ENCODE measurements at regions of chr11 and their contacts with region 1.

Region 1: DNA sequence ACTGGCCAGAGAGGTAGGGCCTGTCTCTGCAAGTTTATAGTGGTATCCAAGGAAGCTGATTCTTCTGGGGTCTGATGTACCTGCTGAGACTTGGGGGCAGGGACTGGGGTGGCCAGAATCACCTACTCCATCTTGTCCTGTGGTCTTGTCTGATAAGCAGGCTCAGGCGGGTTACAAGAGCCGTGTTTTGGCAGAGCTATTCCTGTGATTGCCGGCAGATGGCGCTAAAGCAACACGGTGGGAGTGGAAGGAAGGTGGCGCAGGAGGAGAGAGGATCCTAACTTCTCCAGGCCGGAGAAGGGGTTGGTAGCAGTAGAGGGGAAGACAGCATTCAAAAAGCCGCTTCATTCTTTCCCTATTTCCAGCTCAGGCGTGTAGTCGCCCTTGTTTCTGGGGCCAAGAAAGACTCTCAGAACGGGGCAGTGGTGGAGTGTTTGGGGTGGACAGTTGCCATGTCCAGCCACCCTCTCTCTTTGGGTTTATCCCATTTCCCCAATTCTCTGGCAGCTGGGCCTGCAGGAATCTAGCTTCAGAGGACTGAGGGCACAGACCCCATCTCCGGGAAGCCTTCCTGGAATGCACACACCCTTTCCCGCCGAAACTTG is 15.1 kb downstream of the CHRM1 start:
- DNase-seq: peak; percentile 78 to 81
- ATAC-seq: peak; percentile 70 to 83 (median 75)
- H3K4me3 ChIP-seq: no peak overlapping the region
- H3K27ac ChIP-seq: no peak overlapping the region
- H3K4me1 ChIP-seq: peaks cover 4 to 27% (median 17%) of the 10 kb centered on the region in 9 donors
- H3K27me3 ChIP-seq: no peaks in the 10 kb centered on the region
- CTCF ChIP-seq: peak; percentile 96 to 100 (median 99)

Region 2: GRCh38 chr11:62948765-62949320 is 42.8 kb after region 1 on chr11:
- intact Hi-C with region 1: no loop called
- DNase-seq: no peak
- ATAC-seq: no peak
- H3K4me3 ChIP-seq: no peak overlapping the region
- H3K27ac ChIP-seq: no peak overlapping the region
- H3K4me1 ChIP-seq: no peaks in the 10 kb centered on the region
- H3K27me3 ChIP-seq: peaks cover 0 to 4% (median 0%) of the 10 kb centered on the region in 7 donors
- CTCF ChIP-seq: no peak

Region 3: DNA sequence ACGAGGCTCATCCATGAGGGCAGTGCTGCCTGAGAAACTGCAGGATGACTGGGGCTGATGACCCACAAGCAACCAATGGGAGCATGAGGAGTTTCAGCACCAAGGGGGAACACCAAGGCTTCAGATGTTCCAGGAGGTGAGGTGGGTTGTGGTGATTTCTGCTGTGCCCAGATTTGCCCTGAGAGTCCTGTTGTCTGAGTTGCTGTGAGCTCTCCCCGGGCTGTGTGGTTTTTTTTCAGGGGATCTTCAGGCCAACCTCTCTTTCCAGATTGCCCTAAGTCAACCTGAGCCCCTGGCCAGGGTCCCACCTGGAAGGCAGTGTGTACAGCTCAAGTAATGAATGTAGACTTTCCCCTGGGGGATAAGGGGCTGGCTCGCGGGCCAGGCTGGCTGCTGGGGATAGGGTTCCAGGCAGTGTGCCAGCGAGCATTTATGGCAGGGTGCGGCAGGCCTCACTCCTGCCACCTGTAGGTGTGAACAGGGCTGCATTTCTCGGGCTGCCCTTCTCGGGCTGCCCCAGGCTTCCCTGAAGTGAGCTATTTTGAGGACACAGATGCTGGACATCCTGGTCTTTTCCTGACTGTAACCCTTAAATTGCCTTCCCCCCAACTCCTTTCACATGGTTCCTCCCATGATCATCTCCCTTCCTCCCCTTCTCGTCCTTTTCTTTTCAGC is 69.0 kb after region 1 on chr11:
- intact Hi-C with region 1: loop called in 5 of 10 experiments (anchors 2 to 10 kb)
- DNase-seq: peak; percentile 55 to 60
- ATAC-seq: peak; percentile 76 to 92 (median 84)
- H3K4me3 ChIP-seq: no peak overlapping the region
- H3K27ac ChIP-seq: no peak overlapping the region
- H3K4me1 ChIP-seq: peaks cover 0 to 14% (median 7%) of the 10 kb centered on the region in 9 donors
- H3K27me3 ChIP-seq: peaks cover 0 to 4% (median 0%) of the 10 kb centered on the region in 7 donors
- CTCF ChIP-seq: peak; percentile 17 to 64 (median 52)

Region 4: GRCh38 chr11:63012430-63012829 is 106.4 kb after region 1 on chr11:
- intact Hi-C with region 1: no loop called
- DNase-seq: no peak
- ATAC-seq: no peak
- H3K4me3 ChIP-seq: no peak overlapping the region
- H3K27ac ChIP-seq: no peak overlapping the region
- H3K4me1 ChIP-seq: peaks cover 0 to 21% (median 0%) of the 10 kb centered on the region in 9 donors
- H3K27me3 ChIP-seq: peaks cover 0 to 25% (median 0%) of the 10 kb centered on the region in 7 donors
- CTCF ChIP-seq: no peak

Region 5: GRCh38 chr11:63023841-63024648 is 118.0 kb after region 1 on chr11:
- intact Hi-C with region 1: loop called (anchors 1 to 2 kb)
- DNase-seq: peak; percentile 86 to 89
- ATAC-seq: peak; percentile 88 to 95 (median 90)
- H3K4me3 ChIP-seq: no peak overlapping the region
- H3K27ac ChIP-seq: no peak overlapping the region
- H3K4me1 ChIP-seq: peaks cover 0 to 8% (median 5%) of the 10 kb centered on the region in 9 donors
- H3K27me3 ChIP-seq: peaks cover 0 to 19% (median 3%) of the 10 kb centered on the region in 7 donors
- CTCF ChIP-seq: peak; percentile 97 to 100 (median 100)